ENCODE measurements at regions of chr14 and their contacts with region 1.

Region 1: DNA sequence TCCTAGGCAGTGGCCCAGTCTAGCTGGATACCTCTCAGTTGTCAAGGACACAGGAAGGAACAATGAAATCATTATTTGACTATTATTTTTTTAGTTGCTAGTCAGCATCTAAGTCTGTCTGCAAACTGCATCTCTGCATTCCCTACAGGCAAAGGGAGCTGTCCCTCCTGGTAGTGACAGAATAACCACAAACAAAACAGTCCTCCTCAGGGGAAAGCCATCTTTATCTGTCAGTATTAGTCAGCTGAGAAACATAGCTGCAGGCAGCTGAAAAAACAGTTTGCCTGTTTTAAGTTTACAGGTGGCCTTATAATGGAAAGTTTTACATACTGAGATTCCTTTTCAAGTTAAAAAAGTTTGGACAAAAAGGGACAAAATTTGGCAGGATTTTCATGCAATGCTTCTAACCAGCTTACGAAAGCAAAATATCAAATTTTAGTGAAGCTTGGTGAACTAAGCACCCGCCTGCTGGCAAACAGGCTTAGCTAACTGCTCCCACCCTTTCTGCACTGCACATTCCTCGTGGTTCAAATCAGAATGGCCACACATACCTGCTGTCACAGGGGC is 29.5 kb downstream of the SLC25A21 start:
- DNase-seq: peak; percentile 72
- ATAC-seq: peak; percentile 78
- H3K4me3 ChIP-seq: no peak overlapping the region
- H3K27ac ChIP-seq: no peak overlapping the region
- H3K4me1 ChIP-seq: peaks cover 2% of the 10 kb centered on the region
- H3K27me3 ChIP-seq: no peaks in the 10 kb centered on the region
- CTCF ChIP-seq: no peak
- POLR2A ChIP-seq: no peak
- RAD21 ChIP-seq: no peak

Region 2: DNA sequence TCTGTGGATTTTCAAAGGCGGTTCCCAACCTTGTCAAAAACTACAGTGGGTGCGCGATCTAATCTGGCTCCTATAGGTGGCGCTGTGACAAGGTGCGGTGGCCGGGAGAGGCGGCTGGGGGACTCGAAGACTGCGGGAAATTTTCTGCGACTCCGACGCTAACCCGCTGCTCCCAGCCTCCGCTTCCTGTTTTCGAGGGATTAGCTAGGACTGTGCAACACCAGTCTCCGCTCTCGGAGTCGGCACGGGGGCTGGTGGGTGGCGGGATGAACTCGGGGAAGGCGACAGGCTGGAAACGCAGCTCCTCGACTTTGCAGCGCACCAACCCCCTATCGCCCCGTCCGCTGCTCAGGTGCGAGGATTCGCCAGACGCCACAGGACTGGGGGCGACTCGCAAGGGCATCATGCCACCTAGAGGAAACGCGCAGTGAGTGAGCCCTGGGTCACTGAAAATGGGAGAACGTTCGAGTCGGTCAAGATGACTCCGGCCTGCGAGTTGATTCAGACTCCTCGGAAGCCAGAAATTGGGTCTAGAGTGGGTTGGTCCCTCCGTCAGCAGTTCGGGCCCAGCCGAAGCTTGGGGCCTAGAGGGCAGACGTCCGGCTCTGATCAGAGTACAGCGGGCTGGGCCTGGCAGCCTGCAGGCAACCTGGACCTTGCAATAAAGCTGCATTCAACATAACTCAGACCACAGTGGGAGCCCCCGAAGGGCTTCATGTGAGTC is 486.8 kb before region 1 on chr14:
- CTCF ChIA-PET with region 1: no interaction called
- POLR2A ChIA-PET with region 1: no interaction called
- dilution Hi-C with region 1: no loop called
- in situ Hi-C with region 1: loop called (anchors 10 kb)
- intact Hi-C with region 1: no loop called
- DNase-seq: no peak
- ATAC-seq: no peak
- H3K4me3 ChIP-seq: no peak overlapping the region
- H3K27ac ChIP-seq: no peak overlapping the region
- H3K4me1 ChIP-seq: peaks cover 3% of the 10 kb centered on the region; the same call in 1 of the 2 replicates
- H3K27me3 ChIP-seq: peaks cover 86% of the 10 kb centered on the region
- CTCF ChIP-seq: peak; percentile 32; the same call in 1 of the 2 replicates
- POLR2A ChIP-seq: no peak
- RAD21 ChIP-seq: no peak

Region 3: GRCh38 chr14:36773136-36773540 is 369.8 kb before region 1 on chr14:
- CTCF ChIA-PET with region 1: no interaction called
- POLR2A ChIA-PET with region 1: no interaction called
- dilution Hi-C with region 1: no loop called
- in situ Hi-C with region 1: no loop called
- intact Hi-C with region 1: loop called (anchors 10 kb)
- DNase-seq: peak; percentile 15
- ATAC-seq: 0 out of 2 replicates have a peak, but pooled peaks have one; percentile 32
- H3K4me3 ChIP-seq: no peak overlapping the region
- H3K27ac ChIP-seq: no peak overlapping the region
- H3K4me1 ChIP-seq: no peaks in the 10 kb centered on the region
- H3K27me3 ChIP-seq: no peaks in the 10 kb centered on the region
- CTCF ChIP-seq: no peak
- POLR2A ChIP-seq: no peak
- RAD21 ChIP-seq: no peak

Region 4: GRCh38 chr14:36852981-36853691 is 289.8 kb before region 1 on chr14:
- CTCF ChIA-PET with region 1: no interaction called
- POLR2A ChIA-PET with region 1: no interaction called
- dilution Hi-C with region 1: no loop called
- in situ Hi-C with region 1: no loop called
- intact Hi-C with region 1: loop called (anchors 10 kb)
- DNase-seq: no peak
- ATAC-seq: no peak
- H3K4me3 ChIP-seq: no peak overlapping the region
- H3K27ac ChIP-seq: no peak overlapping the region
- H3K4me1 ChIP-seq: no peaks in the 10 kb centered on the region
- H3K27me3 ChIP-seq: peaks cover 4% of the 10 kb centered on the region
- CTCF ChIP-seq: no peak
- POLR2A ChIP-seq: no peak
- RAD21 ChIP-seq: no peak

Region 5: GRCh38 chr14:37493606-37494005 is 350.7 kb after region 1 on chr14:
- CTCF ChIA-PET with region 1: no interaction called
- POLR2A ChIA-PET with region 1: no interaction called
- dilution Hi-C with region 1: no loop called
- in situ Hi-C with region 1: no loop called
- intact Hi-C with region 1: no loop called
- DNase-seq: peak; percentile 33
- ATAC-seq: peak; percentile 40; the same call in 1 of the 2 replicates
- H3K4me3 ChIP-seq: no peak overlapping the region
- H3K27ac ChIP-seq: no peak overlapping the region
- H3K4me1 ChIP-seq: no peaks in the 10 kb centered on the region
- H3K27me3 ChIP-seq: no peaks in the 10 kb centered on the region
- CTCF ChIP-seq: no peak
- POLR2A ChIP-seq: no peak
- RAD21 ChIP-seq: no peak